Motor neuron (in vitro differentiated cells): ENCODE measurements at regions of chr3 and their contacts with region 1.

Region 1: GRCh38 chr3:192467230-192468140 is 259.9 kb downstream of the FGF12 start:
- ATAC-seq: peak; percentile 66 to 82 (median 74)
- H3K4me3 ChIP-seq: no peak overlapping the region
- H3K27ac ChIP-seq: no peak overlapping the region
- H3K4me1 ChIP-seq: no peaks in the 10 kb centered on the region

Region 2: DNA sequence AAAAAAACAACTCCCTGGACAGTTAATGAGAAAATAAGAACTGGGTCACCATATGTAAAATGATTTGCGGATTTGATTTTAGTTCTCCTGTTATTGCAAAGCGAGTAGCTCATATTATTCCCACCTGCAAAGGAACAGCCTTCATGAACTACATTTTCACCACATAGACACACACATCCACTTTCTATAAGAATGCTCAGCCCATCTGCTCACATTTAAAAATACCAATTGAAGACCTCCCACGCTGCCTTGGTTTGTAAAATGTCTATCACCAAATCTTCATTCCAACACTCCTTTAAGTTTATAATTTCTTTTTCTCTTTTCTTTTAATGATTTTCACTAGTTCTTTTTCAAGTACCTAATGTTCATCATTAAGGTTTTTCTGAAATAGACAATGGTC is 111.2 kb after region 1 on chr3:
- in situ Hi-C with region 1: no loop called
- ATAC-seq: no peak
- H3K4me3 ChIP-seq: no peak overlapping the region
- H3K27ac ChIP-seq: no peak overlapping the region
- H3K4me1 ChIP-seq: no peaks in the 10 kb centered on the region

Region 3: GRCh38 chr3:192772240-192772894 is 304.9 kb after region 1 on chr3:
- in situ Hi-C with region 1: loop called in 3 of 9 experiments (anchors 25 kb)
- ATAC-seq: peak in 4 of 8 experiments; percentile 52 to 100 (median 100)
- H3K4me3 ChIP-seq: no peak overlapping the region
- H3K27ac ChIP-seq: no peak overlapping the region
- H3K4me1 ChIP-seq: no peaks in the 10 kb centered on the region

Region 4: DNA sequence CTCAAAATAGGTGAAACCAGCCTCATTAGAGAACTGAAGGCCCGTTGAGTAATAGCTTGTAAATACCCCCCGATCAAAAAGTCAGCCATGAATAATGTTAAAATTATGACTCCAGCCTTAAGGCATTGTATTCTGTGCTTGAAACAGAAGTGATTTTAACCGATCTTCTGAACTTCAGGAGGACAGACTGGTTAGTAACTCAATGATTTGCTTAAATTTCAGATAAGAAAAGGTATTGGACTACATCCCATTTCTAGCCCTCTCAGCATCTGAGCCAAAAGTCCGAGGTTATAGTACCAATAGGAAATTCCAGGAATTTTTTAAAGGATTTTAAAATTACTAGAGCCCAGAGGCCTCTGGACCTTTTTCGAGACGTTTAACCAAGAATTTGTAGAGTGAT is 327.5 kb after region 1 on chr3:
- in situ Hi-C with region 1: loop called in 1 of 9 experiments (anchors 25 kb)
- ATAC-seq: no peak
- H3K4me3 ChIP-seq: no peak overlapping the region
- H3K27ac ChIP-seq: no peak overlapping the region
- H3K4me1 ChIP-seq: no peaks in the 10 kb centered on the region